GM10248 (cell line): ENCODE measurements at regions of chr18 and their contacts with region 1.

Region 1: GRCh38 chr18:21074336-21075323 is 37.0 kb downstream of the ROCK1 start:
- DNase-seq: no peak
- CTCF ChIP-seq: no peak

Region 2: GRCh38 chr18:21038201-21038600 is 36.4 kb before region 1 on chr18:
- CTCF ChIA-PET with region 1: no interaction called
- POLR2A ChIA-PET with region 1: no interaction called
- DNase-seq: no peak
- CTCF ChIP-seq: no peak

Region 3: GRCh38 chr18:21064347-21064746 is 10.3 kb before region 1 on chr18:
- CTCF ChIA-PET with region 1: interaction called, 12 read pairs
- POLR2A ChIA-PET with region 1: no interaction called
- DNase-seq: no peak
- CTCF ChIP-seq: no peak